ENCODE measurements at regions of chr19 and their contacts with region 1.

Region 1: DNA sequence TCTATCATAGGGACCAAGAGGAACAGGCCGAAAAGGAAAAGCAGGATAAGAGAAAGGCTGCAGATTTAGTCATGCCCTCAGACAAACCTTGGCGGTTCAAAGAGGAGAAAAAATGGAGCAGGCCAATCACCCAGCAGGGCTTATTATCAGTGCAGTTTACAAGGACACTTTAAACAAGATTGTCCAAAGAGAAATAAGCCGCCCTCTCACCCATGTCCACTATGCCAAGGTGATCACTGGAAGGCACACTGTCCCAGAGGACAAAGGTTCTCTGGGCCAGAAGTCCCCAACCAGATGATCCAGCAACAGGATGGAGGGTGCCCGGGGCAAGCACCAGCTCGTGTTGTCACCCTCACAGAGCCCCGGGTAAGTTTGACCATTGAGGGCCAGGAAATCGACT is 8.3 kb upstream of the REX1BD start:
- DNase-seq: no peak
- H3K4me3 ChIP-seq: no peak overlapping the region
- H3K4me3 Mint-ChIP-seq: no peak overlapping the region
- H3K27ac ChIP-seq: no peak overlapping the region
- H3K27ac Mint-ChIP-seq: no peak overlapping the region
- H3K4me1 ChIP-seq: peaks cover 2% of the 10 kb centered on the region
- H3K4me1 Mint-ChIP-seq: peaks cover under 1 to 1% (median under 1%) of the 10 kb centered on the region in 3 donors
- H3K27me3 ChIP-seq: no peaks in the 10 kb centered on the region
- H3K27me3 Mint-ChIP-seq: no peaks in the 10 kb centered on the region

Region 2: GRCh38 chr19:17985037-17985818 is 595.1 kb before region 1 on chr19:
- CTCF ChIA-PET with region 1: no interaction called
- POLR2A ChIA-PET with region 1: no interaction called
- DNase-seq: no peak
- H3K4me3 ChIP-seq: no peak overlapping the region
- H3K4me3 Mint-ChIP-seq: no peak overlapping the region
- H3K27ac ChIP-seq: no peak overlapping the region
- H3K27ac Mint-ChIP-seq: no peak overlapping the region
- H3K4me1 ChIP-seq: no peaks in the 10 kb centered on the region
- H3K4me1 Mint-ChIP-seq: no peaks in the 10 kb centered on the region
- H3K27me3 ChIP-seq: no peaks in the 10 kb centered on the region
- H3K27me3 Mint-ChIP-seq: peaks cover 11 to 15% of the 10 kb centered on the region in 2 donors

Region 3: GRCh38 chr19:18594096-18594823 is 13.9 kb after region 1 on chr19:
- CTCF ChIA-PET with region 1: interaction called, 10 read pairs
- POLR2A ChIA-PET with region 1: interaction called, 4 read pairs
- DNase-seq: peak; percentile 66 to 81 (median 72)
- H3K4me3 ChIP-seq: peak overlapping the region; percentile 75
- H3K4me3 Mint-ChIP-seq: peak overlapping the region; percentile 68 to 79 (median 77)
- H3K27ac ChIP-seq: peak overlapping the region; percentile 38
- H3K27ac Mint-ChIP-seq: peak overlapping the region; percentile 56 to 89 (median 82)
- H3K4me1 ChIP-seq: peaks cover 28% of the 10 kb centered on the region
- H3K4me1 Mint-ChIP-seq: peaks cover 24 to 36% (median 29%) of the 10 kb centered on the region in 3 donors
- H3K27me3 ChIP-seq: peaks cover 4% of the 10 kb centered on the region
- H3K27me3 Mint-ChIP-seq: peaks cover under 1 to 3% of the 10 kb centered on the region in 2 donors

Region 4: DNA sequence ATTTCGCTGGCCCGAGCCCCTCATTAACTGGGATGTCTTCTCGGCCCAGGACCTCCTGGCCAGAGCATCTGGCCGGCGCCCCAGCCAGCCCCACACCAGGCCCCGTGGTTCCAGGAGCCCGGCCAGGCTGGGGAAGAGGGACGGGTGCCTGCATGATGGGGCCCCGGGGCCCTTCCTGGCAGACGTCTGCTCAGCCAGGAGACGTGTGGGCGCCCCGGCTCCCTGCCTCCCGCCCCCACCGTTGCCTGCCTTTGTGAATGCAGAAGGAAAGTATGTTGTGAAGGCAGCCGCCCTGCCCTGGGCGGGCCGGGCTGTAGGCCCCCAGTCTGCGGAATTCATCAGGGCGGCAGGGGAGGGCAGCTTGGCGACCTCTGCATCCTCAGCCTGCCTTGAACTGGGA is 215.2 kb after region 1 on chr19:
- CTCF ChIA-PET with region 1: no interaction called
- POLR2A ChIA-PET with region 1: no interaction called
- DNase-seq: no peak
- H3K4me3 ChIP-seq: no peak overlapping the region
- H3K4me3 Mint-ChIP-seq: no peak overlapping the region
- H3K27ac ChIP-seq: no peak overlapping the region
- H3K27ac Mint-ChIP-seq: no peak overlapping the region
- H3K4me1 ChIP-seq: peaks cover under 1% of the 10 kb centered on the region
- H3K4me1 Mint-ChIP-seq: peaks cover 0 to 5% (median under 1%) of the 10 kb centered on the region in 3 donors
- H3K27me3 ChIP-seq: peaks cover 15% of the 10 kb centered on the region
- H3K27me3 Mint-ChIP-seq: peaks cover 34 to 53% of the 10 kb centered on the region in 2 donors

Measured in CD8-positive, alpha-beta memory T cell (primary cell).